Activated CD4-positive, alpha-beta T cell treated with anti-CD3 and anti-CD28 coated beads for 36 hours (primary cell): ENCODE measurements at regions of chr3 and their contacts with region 1.

Region 1: DNA sequence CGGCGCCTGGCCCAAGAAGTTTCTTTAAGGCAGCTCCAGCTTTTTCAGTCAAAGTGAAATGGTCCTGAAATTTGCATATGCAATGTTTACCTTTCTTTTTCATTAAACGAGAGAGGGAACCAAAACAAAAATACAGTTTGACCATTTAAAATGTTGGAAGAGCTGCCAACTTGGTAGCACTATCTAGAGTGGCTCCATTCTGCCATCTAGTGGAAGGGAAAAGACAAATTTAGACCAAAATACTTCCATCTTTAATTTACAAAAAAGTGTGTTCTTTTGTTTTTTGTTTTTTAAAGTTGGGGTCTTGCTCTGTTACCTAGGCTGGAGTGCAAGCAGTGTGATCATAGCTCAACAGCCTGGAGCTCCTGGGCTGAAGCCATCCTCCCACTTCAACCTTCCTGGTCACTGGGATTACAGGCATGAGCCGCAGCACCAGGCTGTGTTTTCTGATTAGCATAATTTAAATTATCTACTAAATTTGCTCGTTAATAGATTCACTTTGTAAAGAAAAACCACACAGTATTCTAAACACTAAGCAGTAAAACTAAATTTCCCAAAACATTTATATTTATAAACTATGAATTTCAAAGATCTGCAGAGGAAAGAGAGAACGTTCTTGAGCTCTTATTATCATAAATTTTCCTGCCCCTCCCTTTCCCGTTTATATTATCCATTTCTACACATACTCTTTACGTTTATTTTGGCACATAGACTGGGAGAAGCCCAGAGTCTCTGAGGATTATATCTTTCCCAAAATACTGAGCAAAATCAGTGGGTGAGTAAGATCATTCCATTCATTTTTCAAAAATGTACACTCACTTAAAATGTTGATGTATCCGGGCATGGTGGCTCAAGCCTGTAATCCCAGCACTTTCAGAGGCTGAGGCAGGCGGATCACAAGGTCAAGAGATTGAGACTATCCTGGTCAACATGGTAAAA is 15.4 kb upstream of the RFC4 start:
- DNase-seq: no peak
- ATAC-seq: no peak
- H3K4me3 Mint-ChIP-seq: no peak overlapping the region
- H3K27ac Mint-ChIP-seq: no peak overlapping the region
- H3K4me1 Mint-ChIP-seq: peaks cover 20% of the 10 kb centered on the region
- H3K27me3 Mint-ChIP-seq: peaks cover 5% of the 10 kb centered on the region

Region 2: GRCh38 chr3:185976977-185977678 is 844.6 kb before region 1 on chr3:
- CTCF ChIA-PET with region 1: no interaction called
- POLR2A ChIA-PET with region 1: no interaction called
- intact Hi-C with region 1: loop called (anchors 2 to 5 kb)
- DNase-seq: peak; percentile 93
- ATAC-seq: peak; percentile 91
- H3K4me3 Mint-ChIP-seq: no peak overlapping the region
- H3K27ac Mint-ChIP-seq: peak overlapping the region; percentile 11
- H3K4me1 Mint-ChIP-seq: peaks cover 18% of the 10 kb centered on the region
- H3K27me3 Mint-ChIP-seq: no peaks in the 10 kb centered on the region

Region 3: GRCh38 chr3:185983495-185984141 is 838.1 kb before region 1 on chr3:
- CTCF ChIA-PET with region 1: interaction called, 3 read pairs
- POLR2A ChIA-PET with region 1: no interaction called
- intact Hi-C with region 1: loop called in 1 of 2 experiments (anchors 5 kb)
- DNase-seq: peak; percentile 71
- ATAC-seq: peak; percentile 83
- H3K4me3 Mint-ChIP-seq: no peak overlapping the region
- H3K27ac Mint-ChIP-seq: no peak overlapping the region
- H3K4me1 Mint-ChIP-seq: peaks cover 4% of the 10 kb centered on the region
- H3K27me3 Mint-ChIP-seq: peaks cover 7% of the 10 kb centered on the region

Region 4: DNA sequence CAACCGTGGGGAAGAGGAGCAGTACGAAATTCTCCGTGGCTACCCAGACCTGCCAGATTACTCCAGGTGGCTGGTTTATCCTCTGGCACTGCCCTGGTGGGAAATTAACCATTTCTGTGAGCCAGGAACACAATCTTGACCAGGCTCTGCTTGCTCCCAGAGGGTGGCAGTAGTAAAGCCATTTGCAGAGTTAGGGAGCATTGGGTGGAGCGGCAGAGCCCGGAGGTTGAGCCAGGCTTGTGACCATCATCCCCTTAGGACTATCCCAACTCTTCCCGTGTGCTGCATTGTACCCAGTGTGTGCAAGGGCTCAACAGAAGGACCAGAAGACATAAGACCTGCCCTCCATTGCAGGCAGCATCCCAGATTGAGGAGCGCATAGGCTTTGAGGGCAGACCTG is 99.2 kb before region 1 on chr3:
- CTCF ChIA-PET with region 1: no interaction called
- POLR2A ChIA-PET with region 1: no interaction called
- intact Hi-C with region 1: no loop called
- DNase-seq: no peak
- ATAC-seq: no peak
- H3K4me3 Mint-ChIP-seq: no peak overlapping the region
- H3K27ac Mint-ChIP-seq: no peak overlapping the region
- H3K4me1 Mint-ChIP-seq: no peaks in the 10 kb centered on the region
- H3K27me3 Mint-ChIP-seq: peaks cover 6% of the 10 kb centered on the region

Region 5: DNA sequence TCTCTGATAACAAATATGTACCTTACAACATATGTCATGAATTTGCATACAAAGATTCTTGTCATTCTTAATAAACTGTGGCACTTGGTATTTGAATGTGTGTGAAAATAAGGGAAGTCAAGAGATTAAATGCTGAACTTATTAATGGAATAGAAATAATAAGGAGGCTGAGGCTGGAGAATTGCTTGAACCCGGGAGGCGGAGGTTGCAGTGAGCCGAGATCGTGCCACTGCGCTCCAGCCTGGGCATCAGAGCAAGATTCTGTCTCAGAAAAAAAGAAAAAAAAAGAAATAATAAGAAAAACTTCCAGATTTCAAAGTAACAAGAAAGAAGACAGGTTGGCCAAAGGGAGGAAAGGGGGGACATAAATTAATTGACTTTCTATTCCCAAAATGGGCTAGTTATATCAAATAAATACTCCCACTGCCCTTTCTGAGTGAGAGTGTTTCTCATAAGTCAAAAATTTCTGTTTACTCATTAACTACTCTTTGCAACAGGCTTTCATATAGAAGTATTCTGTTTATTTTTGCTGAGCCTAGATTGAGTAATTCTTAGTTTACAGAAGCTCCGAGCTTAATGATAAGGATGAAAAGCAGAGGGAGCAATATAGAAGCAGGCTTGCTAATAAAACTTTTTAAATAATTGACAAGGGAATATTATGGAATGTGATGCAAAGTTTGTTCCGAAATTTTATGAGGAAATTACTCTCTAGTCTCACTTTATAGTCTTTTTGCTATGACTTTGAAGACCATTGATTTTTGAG is 78.9 kb before region 1 on chr3:
- CTCF ChIA-PET with region 1: no interaction called
- POLR2A ChIA-PET with region 1: no interaction called
- intact Hi-C with region 1: no loop called
- DNase-seq: no peak
- ATAC-seq: no peak
- H3K4me3 Mint-ChIP-seq: no peak overlapping the region
- H3K27ac Mint-ChIP-seq: no peak overlapping the region
- H3K4me1 Mint-ChIP-seq: no peaks in the 10 kb centered on the region
- H3K27me3 Mint-ChIP-seq: no peaks in the 10 kb centered on the region

Region 6: GRCh38 chr3:186790261-186790981 is 31.3 kb before region 1 on chr3:
- CTCF ChIA-PET with region 1: interaction called, 4 read pairs
- POLR2A ChIA-PET with region 1: interaction called, 3 read pairs
- intact Hi-C with region 1: loop called in 1 of 2 experiments (anchors 5 kb)
- DNase-seq: no peak
- ATAC-seq: peak; percentile 21
- H3K4me3 Mint-ChIP-seq: peak overlapping the region; percentile 19
- H3K27ac Mint-ChIP-seq: peak overlapping the region; percentile 77
- H3K4me1 Mint-ChIP-seq: peaks cover 42% of the 10 kb centered on the region
- H3K27me3 Mint-ChIP-seq: no peaks in the 10 kb centered on the region

Region 7: DNA sequence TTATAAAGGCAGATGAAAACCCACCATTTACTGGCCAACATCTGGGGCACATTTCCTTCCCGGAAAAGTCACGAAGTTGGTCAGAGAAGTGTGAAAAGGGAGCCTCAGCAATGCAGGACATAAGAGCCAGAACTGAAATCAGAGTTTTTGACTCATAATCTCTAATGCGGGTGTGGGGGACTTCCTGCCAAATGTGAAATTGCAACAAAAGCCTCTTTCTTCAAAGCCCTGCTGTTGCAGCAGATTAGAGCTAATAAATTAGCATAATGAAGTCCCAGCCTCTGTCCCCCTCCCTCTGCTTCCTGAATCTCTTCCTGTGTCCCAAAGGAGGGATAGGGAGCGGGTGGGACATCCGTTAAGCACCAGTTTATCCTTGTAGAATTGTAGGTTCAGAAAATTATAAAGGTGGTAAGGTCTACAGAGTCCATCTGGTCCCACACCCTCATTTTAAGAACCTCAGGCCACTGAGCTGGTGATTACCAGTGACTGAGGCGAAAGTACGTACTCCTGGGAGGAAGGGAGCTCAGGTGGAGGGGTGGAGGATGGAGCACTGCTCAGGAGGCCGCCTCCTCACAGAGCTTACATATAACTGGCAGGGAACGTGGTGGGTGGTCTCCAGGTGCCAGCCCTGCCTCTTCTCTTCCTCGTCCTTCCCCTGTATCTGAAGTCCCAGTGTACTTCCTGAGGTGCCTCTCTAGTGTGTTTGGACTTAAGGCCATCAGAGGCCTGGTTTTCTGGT is 143.6 kb after region 1 on chr3:
- CTCF ChIA-PET with region 1: no interaction called
- POLR2A ChIA-PET with region 1: no interaction called
- intact Hi-C with region 1: no loop called
- DNase-seq: no peak
- ATAC-seq: peak; percentile 57
- H3K4me3 Mint-ChIP-seq: no peak overlapping the region
- H3K27ac Mint-ChIP-seq: peak overlapping the region; percentile 62
- H3K4me1 Mint-ChIP-seq: peaks cover 50% of the 10 kb centered on the region
- H3K27me3 Mint-ChIP-seq: no peaks in the 10 kb centered on the region